Naive thymus-derived CD4-positive, alpha-beta T cell (primary cell): ENCODE measurements at regions of chr19 and their contacts with region 1.

Region 1: DNA sequence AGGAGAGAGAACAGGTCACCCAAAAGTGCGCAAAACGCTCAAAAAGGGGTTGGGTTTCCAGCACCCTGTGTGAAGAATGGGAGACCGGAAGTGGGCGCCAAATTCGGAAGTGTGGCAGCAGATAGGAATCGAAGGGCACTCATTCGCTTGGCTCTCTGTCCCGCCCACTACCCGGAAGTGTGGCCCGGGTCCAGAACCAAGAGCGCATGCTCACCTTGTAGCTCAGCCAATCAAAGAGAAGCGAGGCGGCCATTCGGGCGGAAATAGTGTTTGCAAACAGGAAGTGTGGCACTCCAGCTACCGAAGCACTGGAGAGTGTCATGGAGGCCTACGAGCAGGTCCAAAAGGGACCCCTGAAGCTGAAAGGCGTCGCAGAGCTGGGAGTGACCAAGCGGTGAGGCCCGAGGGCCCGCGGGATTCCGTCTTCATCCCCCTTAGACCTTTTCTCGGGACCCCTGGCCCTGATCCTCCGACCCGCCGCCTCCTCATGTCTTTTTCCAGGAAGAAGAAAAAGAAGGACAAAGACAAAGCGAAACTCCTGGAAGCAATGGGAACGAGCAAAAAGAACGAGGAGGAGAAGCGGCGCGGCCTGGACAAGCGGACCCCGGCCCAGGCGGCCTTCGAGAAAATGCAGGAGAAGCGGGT is at the start of gene FAM32A:
- DNase-seq: peak; percentile 91 to 99 (median 99)
- ATAC-seq: peak; percentile 96
- H3K4me3 ChIP-seq: peak within 1 kb of the TSS; percentile 97
- H3K4me3 Mint-ChIP-seq: peak within 1 kb of the TSS; percentile 90 to 100 (median 99)
- H3K27ac ChIP-seq: peak within 1 kb of the TSS; percentile 87
- H3K27ac Mint-ChIP-seq: peak within 1 kb of the TSS; percentile 94 to 100 (median 96)
- H3K4me1 ChIP-seq: peaks cover 13 to 16% of the 10 kb centered on the region in 2 donors
- H3K4me1 Mint-ChIP-seq: peaks cover 9 to 46% (median 36%) of the 10 kb centered on the region in 7 donors
- H3K27me3 ChIP-seq: peaks cover 0 to 4% of the 10 kb centered on the region in 2 donors
- H3K27me3 Mint-ChIP-seq: peaks cover 0 to 2% (median 0%) of the 10 kb centered on the region in 5 donors
- total RNA-seq, gene FAM32A: 45.9 to 69.4 (median 65.9) TPM

Region 2: DNA sequence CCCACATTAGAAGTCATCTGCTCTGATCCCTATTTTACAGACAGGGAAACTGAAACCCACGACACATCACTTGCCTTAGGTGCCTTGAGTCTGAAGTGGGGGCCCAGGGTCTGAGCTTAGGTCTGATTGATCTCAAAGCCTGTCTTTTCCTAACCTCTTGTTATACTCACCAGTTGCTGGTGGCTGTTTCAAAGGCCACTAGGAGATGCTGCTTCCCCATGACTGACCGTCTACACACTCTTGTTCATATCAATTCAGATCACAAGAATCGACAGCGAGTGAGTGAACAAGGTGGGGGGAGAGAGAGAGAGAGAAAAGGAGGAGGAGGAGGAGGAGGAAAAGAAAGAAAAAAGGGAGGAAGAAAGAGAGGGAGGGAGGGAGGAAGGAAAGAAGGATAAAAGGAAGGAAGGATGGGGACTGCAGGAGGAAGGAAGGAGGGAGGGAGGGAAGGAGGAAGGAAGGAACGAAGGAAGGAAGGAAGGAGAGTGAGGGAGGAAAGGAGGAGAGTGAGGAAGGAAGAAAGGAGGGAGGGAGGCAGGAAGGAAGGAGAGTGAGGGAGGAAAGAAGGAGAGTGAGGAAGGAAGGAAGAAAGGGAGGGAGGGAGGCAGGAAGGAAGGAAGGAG is 373.1 kb before region 1 on chr19:
- CTCF ChIA-PET with region 1: interaction called, 3 read pairs
- POLR2A ChIA-PET with region 1: no interaction called
- intact Hi-C with region 1: loop called in 1 of 2 experiments (anchors 1 kb)
- DNase-seq: peak in 6 of 9 donors; percentile 28 to 71 (median 38)
- ATAC-seq: no peak
- H3K4me3 ChIP-seq: no peak overlapping the region
- H3K4me3 Mint-ChIP-seq: peak overlapping the region in 1 of 10 donors; percentile 3
- H3K27ac ChIP-seq: no peak overlapping the region
- H3K27ac Mint-ChIP-seq: peak overlapping the region in 4 of 9 donors; percentile 38 to 56 (median 48)
- H3K4me1 ChIP-seq: peaks cover 3 to 8% of the 10 kb centered on the region in 2 donors
- H3K4me1 Mint-ChIP-seq: peaks cover 2 to 24% (median 14%) of the 10 kb centered on the region in 7 donors
- H3K27me3 ChIP-seq: peaks cover 0 to 4% of the 10 kb centered on the region in 2 donors
- H3K27me3 Mint-ChIP-seq: peaks cover 6 to 27% (median 14%) of the 10 kb centered on the region in 5 donors

Region 3: GRCh38 chr19:16041299-16041990 is 143.8 kb before region 1 on chr19:
- CTCF ChIA-PET with region 1: interaction called, 5 read pairs
- POLR2A ChIA-PET with region 1: interaction called, 7 read pairs
- intact Hi-C with region 1: loop called (anchors 1 kb)
- DNase-seq: peak; percentile 47 to 85 (median 67)
- ATAC-seq: peak; percentile 90
- H3K4me3 ChIP-seq: no peak overlapping the region
- H3K4me3 Mint-ChIP-seq: peak overlapping the region; percentile 23 to 76 (median 50)
- H3K27ac ChIP-seq: no peak overlapping the region
- H3K27ac Mint-ChIP-seq: peak overlapping the region in 2 of 9 donors; percentile 15 to 49
- H3K4me1 ChIP-seq: peaks cover 0 to 7% of the 10 kb centered on the region in 2 donors
- H3K4me1 Mint-ChIP-seq: peaks cover 6 to 22% (median 15%) of the 10 kb centered on the region in 7 donors
- H3K27me3 ChIP-seq: no peaks in the 10 kb centered on the region
- H3K27me3 Mint-ChIP-seq: peaks cover 0 to 23% (median 0%) of the 10 kb centered on the region in 5 donors

Region 4: DNA sequence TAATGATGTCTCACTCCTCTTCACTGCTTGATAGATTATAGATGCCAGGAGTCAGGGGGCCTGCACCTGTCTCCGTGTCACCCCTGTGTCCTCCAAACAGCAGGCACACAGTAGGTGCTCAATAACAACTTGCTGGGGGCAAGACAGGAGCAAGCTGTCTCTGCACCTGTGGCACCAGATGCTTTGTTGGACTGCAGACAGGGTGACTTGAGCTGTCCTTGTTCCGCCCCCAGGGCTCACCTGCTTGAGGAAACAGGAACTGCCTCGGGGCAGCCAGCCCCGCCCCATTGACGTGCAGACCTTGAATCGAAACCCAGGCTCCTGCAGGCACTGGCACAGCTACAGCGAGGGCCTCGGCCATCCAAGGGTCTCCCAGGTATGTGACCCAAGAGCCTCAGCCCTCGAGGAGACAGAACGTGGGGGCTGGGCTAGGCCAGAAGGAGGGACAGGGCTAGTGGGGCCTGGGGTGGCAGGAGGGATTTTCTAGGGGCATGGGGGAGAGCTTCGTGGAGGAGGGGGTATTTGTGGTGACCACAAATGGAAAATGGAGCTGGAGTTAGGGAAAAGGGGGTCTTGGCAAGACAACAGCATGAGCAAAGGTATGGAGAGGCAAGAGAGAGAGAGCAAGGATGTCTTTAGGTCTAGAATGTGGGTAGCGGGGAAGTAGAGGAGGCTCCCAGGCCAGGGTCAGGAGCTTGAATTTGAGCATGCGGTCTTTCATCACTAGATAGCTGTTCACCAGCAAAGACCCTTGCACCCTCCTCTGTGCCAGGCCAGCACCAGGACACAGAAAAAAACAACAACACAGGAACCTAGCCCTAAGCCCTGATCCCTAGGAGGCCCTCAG is 41.6 kb before region 1 on chr19 and contains the start of gene HSH2D:
- CTCF ChIA-PET with region 1: interaction called, 3 read pairs
- POLR2A ChIA-PET with region 1: no interaction called
- intact Hi-C with region 1: loop called in 1 of 2 experiments (anchors 1 kb)
- DNase-seq: peak; percentile 57 to 83 (median 81)
- ATAC-seq: peak; percentile 94
- H3K4me3 ChIP-seq: peak within 1 kb of the TSS; percentile 95
- H3K4me3 Mint-ChIP-seq: peak within 1 kb of the TSS; percentile 88 to 100 (median 95)
- H3K27ac ChIP-seq: peak within 1 kb of the TSS; percentile 94
- H3K27ac Mint-ChIP-seq: peak within 1 kb of the TSS; percentile 92 to 100 (median 96)
- H3K4me1 ChIP-seq: peaks cover 12 to 26% of the 10 kb centered on the region in 2 donors
- H3K4me1 Mint-ChIP-seq: peaks cover 25 to 57% (median 31%) of the 10 kb centered on the region in 7 donors
- H3K27me3 ChIP-seq: no peaks in the 10 kb centered on the region
- H3K27me3 Mint-ChIP-seq: no peaks in the 10 kb centered on the region
- total RNA-seq, gene HSH2D: 20.0 to 60.0 (median 46.4) TPM

Region 5: GRCh38 chr19:16324384-16325160 is 139.3 kb after region 1 on chr19 and contains the start of gene KLF2:
- CTCF ChIA-PET with region 1: no interaction called
- POLR2A ChIA-PET with region 1: interaction called, 26 read pairs
- intact Hi-C with region 1: loop called in 1 of 2 experiments (anchors 1 kb)
- DNase-seq: peak; percentile 88 to 96 (median 95)
- ATAC-seq: peak; percentile 81
- H3K4me3 ChIP-seq: peak within 1 kb of the TSS; percentile 86
- H3K4me3 Mint-ChIP-seq: peak within 1 kb of the TSS; percentile 51 to 98 (median 85)
- H3K27ac ChIP-seq: peak within 1 kb of the TSS; percentile 98
- H3K27ac Mint-ChIP-seq: peak within 1 kb of the TSS; percentile 85 to 100 (median 96)
- H3K4me1 ChIP-seq: peaks cover 23 to 30% of the 10 kb centered on the region in 2 donors
- H3K4me1 Mint-ChIP-seq: peaks cover 27 to 54% (median 48%) of the 10 kb centered on the region in 7 donors
- H3K27me3 ChIP-seq: no peaks in the 10 kb centered on the region
- H3K27me3 Mint-ChIP-seq: peaks cover 0 to 70% (median 0%) of the 10 kb centered on the region in 5 donors
- total RNA-seq, gene KLF2: 195 to 630 (median 466) TPM

Region 6: GRCh38 chr19:16542045-16542909 is 357.0 kb after region 1 on chr19 and contains the start of gene CHERP:
- CTCF ChIA-PET with region 1: no interaction called
- POLR2A ChIA-PET with region 1: no interaction called
- intact Hi-C with region 1: loop called in 1 of 2 experiments (anchors 1 kb)
- DNase-seq: peak; percentile 90 to 96 (median 93)
- ATAC-seq: peak; percentile 95
- H3K4me3 ChIP-seq: peak within 1 kb of the TSS; percentile 90
- H3K4me3 Mint-ChIP-seq: peak within 1 kb of the TSS; percentile 90 to 99 (median 92)
- H3K27ac ChIP-seq: peak within 1 kb of the TSS; percentile 91
- H3K27ac Mint-ChIP-seq: peak within 1 kb of the TSS; percentile 81 to 97 (median 93)
- H3K4me1 ChIP-seq: peaks cover 25 to 39% of the 10 kb centered on the region in 2 donors
- H3K4me1 Mint-ChIP-seq: peaks cover 44 to 69% (median 55%) of the 10 kb centered on the region in 7 donors
- H3K27me3 ChIP-seq: no peaks in the 10 kb centered on the region
- H3K27me3 Mint-ChIP-seq: no peaks in the 10 kb centered on the region
- total RNA-seq, gene CHERP: 53.8 to 80.7 (median 62.7) TPM